Activated CD4-positive, alpha-beta memory T cell treated with anti-CD3 and anti-CD28 coated beads for 36 hours (primary cell): ENCODE measurements at regions of chr5 and their contacts with region 1.

Region 1: GRCh38 chr5:140351609-140352334 is 5.4 kb upstream of the HBEGF start:
- DNase-seq: peak; percentile 34
- H3K4me3 Mint-ChIP-seq: peak overlapping the region; percentile 23
- H3K27ac Mint-ChIP-seq: no peak overlapping the region
- H3K4me1 Mint-ChIP-seq: peaks cover 10% of the 10 kb centered on the region
- H3K27me3 Mint-ChIP-seq: peaks cover 1% of the 10 kb centered on the region

Region 2: GRCh38 chr5:140261403-140262171 is 90.2 kb before region 1 on chr5:
- CTCF ChIA-PET with region 1: interaction called, 22 read pairs
- POLR2A ChIA-PET with region 1: no interaction called
- intact Hi-C with region 1: no loop called
- DNase-seq: peak; percentile 51
- H3K4me3 Mint-ChIP-seq: no peak overlapping the region
- H3K27ac Mint-ChIP-seq: peak overlapping the region; percentile 6
- H3K4me1 Mint-ChIP-seq: peaks cover 62% of the 10 kb centered on the region
- H3K27me3 Mint-ChIP-seq: no peaks in the 10 kb centered on the region

Region 3: GRCh38 chr5:140312067-140312790 is 39.5 kb before region 1 on chr5:
- CTCF ChIA-PET with region 1: interaction called, 17 read pairs
- POLR2A ChIA-PET with region 1: no interaction called
- intact Hi-C with region 1: no loop called
- DNase-seq: no peak
- H3K4me3 Mint-ChIP-seq: no peak overlapping the region
- H3K27ac Mint-ChIP-seq: no peak overlapping the region
- H3K4me1 Mint-ChIP-seq: peaks cover 6% of the 10 kb centered on the region
- H3K27me3 Mint-ChIP-seq: peaks cover 2% of the 10 kb centered on the region

Region 4: GRCh38 chr5:140362860-140363630 is 11.3 kb after region 1 on chr5:
- CTCF ChIA-PET with region 1: interaction called, 21 read pairs
- POLR2A ChIA-PET with region 1: no interaction called
- intact Hi-C with region 1: no loop called
- DNase-seq: peak; percentile 91
- H3K4me3 Mint-ChIP-seq: peak overlapping the region; percentile 72
- H3K27ac Mint-ChIP-seq: peak overlapping the region; percentile 52
- H3K4me1 Mint-ChIP-seq: peaks cover 4% of the 10 kb centered on the region
- H3K27me3 Mint-ChIP-seq: peaks cover 3% of the 10 kb centered on the region